ENCODE measurements at regions of chr6 and their contacts with region 1.

Region 1: DNA sequence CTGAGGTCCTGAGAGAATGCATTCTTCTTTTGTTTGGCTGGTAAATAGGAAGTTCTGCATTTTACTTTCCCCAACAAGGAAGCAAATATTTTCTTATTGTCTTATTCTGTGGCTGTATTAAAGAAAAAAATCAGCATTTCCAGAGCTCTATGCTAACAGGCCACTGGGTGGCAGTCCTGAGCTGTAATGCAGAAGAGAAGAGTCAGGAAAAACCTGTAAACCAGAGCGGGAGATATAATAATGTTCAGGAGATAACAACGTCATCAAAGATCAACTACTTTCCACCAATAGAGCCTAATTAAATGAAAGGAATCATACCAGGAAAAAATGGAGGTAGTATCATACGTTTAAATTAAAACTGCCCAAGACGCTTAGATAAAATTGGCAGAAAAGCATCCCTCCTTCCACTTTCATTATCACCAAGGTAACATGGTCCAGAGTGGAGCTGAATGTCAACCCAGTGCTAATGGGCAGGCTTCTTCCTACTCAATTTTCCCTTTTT is 55.6 kb upstream of the CARMIL1 start:
- DNase-seq: peak; percentile 74
- ATAC-seq: peak; percentile 67
- H3K4me3 Mint-ChIP-seq: peak overlapping the region; percentile 69
- H3K27ac Mint-ChIP-seq: no peak overlapping the region
- H3K4me1 Mint-ChIP-seq: peaks cover 15% of the 10 kb centered on the region
- H3K27me3 Mint-ChIP-seq: no peaks in the 10 kb centered on the region

Region 2: DNA sequence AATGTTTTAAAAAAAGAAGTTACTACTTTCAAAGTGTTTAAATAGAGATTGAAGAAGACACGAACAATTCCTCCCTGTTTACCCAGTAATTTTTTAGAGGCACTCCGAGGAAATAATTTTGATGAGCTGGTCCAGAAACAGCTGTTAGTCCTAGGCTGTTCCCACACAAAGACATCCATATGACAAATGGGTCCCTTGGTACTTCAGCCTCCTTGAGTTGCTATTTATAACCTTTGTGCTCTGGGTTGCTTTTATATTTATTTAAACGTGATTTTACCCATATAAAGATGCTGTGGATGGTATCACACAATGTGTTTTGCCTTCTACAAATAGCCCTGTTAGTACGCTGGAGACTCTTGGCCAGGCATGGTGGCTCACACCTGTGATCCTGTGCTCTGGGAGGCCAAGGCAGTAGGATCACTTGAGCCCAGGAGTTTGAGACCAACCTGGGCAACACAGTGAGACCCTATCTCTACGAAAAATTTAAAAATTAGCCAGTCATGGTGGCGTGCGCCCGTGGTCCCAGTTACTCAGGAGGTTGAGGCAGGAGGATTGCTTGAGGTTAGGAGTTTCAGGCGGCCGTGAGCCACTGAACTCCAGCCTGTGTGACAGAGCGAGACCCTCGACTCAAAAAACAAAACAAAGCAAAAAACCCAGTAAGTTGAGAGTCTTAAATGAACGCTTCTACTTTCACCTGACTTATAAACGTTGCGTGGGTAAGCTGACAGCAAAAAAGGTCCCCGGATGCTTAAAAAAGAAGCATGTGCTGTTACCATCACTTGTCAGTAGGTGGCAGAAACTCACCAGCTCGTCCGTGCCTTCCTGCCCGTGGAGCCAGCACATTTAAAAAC is 367.9 kb before region 1 on chr6:
- CTCF ChIA-PET with region 1: no interaction called
- DNase-seq: peak; percentile 78
- ATAC-seq: peak; percentile 60
- H3K4me3 Mint-ChIP-seq: no peak overlapping the region
- H3K27ac Mint-ChIP-seq: peak overlapping the region; percentile 88
- H3K4me1 Mint-ChIP-seq: peaks cover 52% of the 10 kb centered on the region
- H3K27me3 Mint-ChIP-seq: no peaks in the 10 kb centered on the region

Region 3: DNA sequence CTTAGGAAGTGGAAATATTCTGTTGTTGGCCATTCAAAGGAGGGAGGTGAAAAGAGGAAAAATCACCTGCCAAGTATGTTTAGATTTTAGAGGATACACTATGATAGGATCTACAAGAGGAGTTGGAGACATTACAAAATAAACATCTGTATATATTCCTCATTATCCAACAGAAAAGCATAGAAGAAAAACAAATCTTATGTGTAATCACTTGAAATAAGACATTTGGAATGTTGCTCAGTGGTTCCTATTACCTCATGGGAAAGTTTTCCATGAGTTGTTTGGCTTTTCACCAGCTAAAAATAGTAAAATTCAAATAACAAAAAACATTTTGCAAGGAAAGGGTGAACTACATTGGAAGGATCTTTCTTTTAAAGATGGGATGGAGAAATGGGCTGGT is 21.0 kb before region 1 on chr6:
- CTCF ChIA-PET with region 1: interaction called, 10 read pairs
- DNase-seq: no peak
- ATAC-seq: no peak
- H3K4me3 Mint-ChIP-seq: no peak overlapping the region
- H3K27ac Mint-ChIP-seq: no peak overlapping the region
- H3K4me1 Mint-ChIP-seq: no peaks in the 10 kb centered on the region
- H3K27me3 Mint-ChIP-seq: peaks cover 10% of the 10 kb centered on the region

Region 4: DNA sequence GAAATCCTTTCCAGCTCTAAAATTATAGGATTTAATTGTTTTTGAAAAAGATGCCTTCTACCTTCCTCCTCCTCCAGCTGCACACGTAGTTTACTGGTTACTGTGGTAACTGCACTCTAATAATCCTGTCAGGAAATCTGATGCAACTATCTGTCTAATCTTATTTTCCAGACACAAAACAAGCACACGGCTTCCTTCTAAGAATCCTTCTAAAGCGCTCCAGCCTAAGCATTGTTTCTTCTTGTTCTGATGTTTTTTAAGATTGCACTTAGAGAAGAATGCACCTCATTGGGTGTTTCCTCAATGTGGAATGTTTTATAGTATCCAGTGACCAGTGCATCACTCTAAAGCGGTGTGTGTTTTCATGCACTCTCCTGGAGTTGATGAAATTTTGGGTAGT is 119.3 kb after region 1 on chr6:
- CTCF ChIA-PET with region 1: no interaction called
- DNase-seq: no peak
- ATAC-seq: no peak
- H3K4me3 Mint-ChIP-seq: no peak overlapping the region
- H3K27ac Mint-ChIP-seq: no peak overlapping the region
- H3K4me1 Mint-ChIP-seq: peaks cover 2% of the 10 kb centered on the region
- H3K27me3 Mint-ChIP-seq: no peaks in the 10 kb centered on the region

Region 5: GRCh38 chr6:25490018-25490801 is 266.7 kb after region 1 on chr6:
- CTCF ChIA-PET with region 1: interaction called, 30 read pairs
- DNase-seq: peak; percentile 79
- ATAC-seq: peak; percentile 79
- H3K4me3 Mint-ChIP-seq: no peak overlapping the region
- H3K27ac Mint-ChIP-seq: no peak overlapping the region
- H3K4me1 Mint-ChIP-seq: peaks cover 4% of the 10 kb centered on the region
- H3K27me3 Mint-ChIP-seq: no peaks in the 10 kb centered on the region

Region 6: DNA sequence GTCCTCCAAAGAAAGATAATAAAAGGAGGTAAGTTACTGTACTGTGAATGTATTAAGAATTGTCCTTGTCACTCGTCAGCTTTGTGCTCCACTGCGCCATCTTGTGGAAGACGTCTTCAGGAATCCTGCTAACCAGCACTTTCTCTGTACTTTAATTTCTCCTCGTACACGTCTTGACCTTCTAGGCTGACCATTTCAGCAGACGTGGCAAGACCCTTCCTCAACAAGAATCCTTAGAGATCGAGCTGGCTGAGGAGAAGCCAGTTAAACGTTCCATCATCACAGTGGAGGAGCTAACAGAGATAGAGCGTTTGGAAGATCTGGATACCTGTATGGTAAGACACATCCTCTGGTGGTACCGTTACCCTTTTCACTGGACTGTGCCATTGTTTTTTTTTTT is 333.0 kb after region 1 on chr6:
- CTCF ChIA-PET with region 1: interaction called, 25 read pairs
- DNase-seq: peak; percentile 86
- ATAC-seq: peak; percentile 64
- H3K4me3 Mint-ChIP-seq: no peak overlapping the region
- H3K27ac Mint-ChIP-seq: no peak overlapping the region
- H3K4me1 Mint-ChIP-seq: peaks cover 2% of the 10 kb centered on the region
- H3K27me3 Mint-ChIP-seq: no peaks in the 10 kb centered on the region